AG04450 (cell line): ENCODE measurements at regions of chr1 and their contacts with region 1.

Region 1: GRCh38 chr1:91282695-91283420 is 121.8 kb downstream of the HFM1 start:
- DNase-seq: peak; percentile 37
- H3K4me3 ChIP-seq: no peak overlapping the region
- H3K27ac ChIP-seq: no peak overlapping the region
- H3K27me3 ChIP-seq: peaks cover 4% of the 10 kb centered on the region
- CTCF ChIP-seq: peak; percentile 85

Region 2: GRCh38 chr1:91080650-91081049 is 202.2 kb before region 1 on chr1:
- CTCF ChIA-PET with region 1: no interaction called
- POLR2A ChIA-PET with region 1: no interaction called
- DNase-seq: no peak
- H3K4me3 ChIP-seq: no peak overlapping the region
- H3K27ac ChIP-seq: no peak overlapping the region
- H3K27me3 ChIP-seq: no peaks in the 10 kb centered on the region
- CTCF ChIP-seq: no peak

Region 3: GRCh38 chr1:91404151-91405012 is 121.5 kb after region 1 on chr1 and contains the start of gene HFM1:
- CTCF ChIA-PET with region 1: interaction called, 11 read pairs
- POLR2A ChIA-PET with region 1: no interaction called
- DNase-seq: no peak
- H3K4me3 ChIP-seq: peak within 1 kb of the TSS; percentile 64
- H3K27ac ChIP-seq: no peak within 1 kb of the TSS
- H3K27me3 ChIP-seq: peaks cover 4% of the 10 kb centered on the region
- CTCF ChIP-seq: no peak; the same call in 1 of the 2 replicates
- polyA plus RNA-seq, gene HFM1: 0.04 TPM in 1 of 2 replicates, not detected in the other

Region 4: GRCh38 chr1:91428182-91428798 is 145.4 kb after region 1 on chr1:
- CTCF ChIA-PET with region 1: no interaction called
- POLR2A ChIA-PET with region 1: no interaction called
- DNase-seq: no peak
- H3K4me3 ChIP-seq: no peak overlapping the region
- H3K27ac ChIP-seq: no peak overlapping the region
- H3K27me3 ChIP-seq: peaks cover 3% of the 10 kb centered on the region
- CTCF ChIP-seq: no peak

Region 5: GRCh38 chr1:91500756-91501522 is 218.1 kb after region 1 on chr1 and contains the start of gene CDC7:
- CTCF ChIA-PET with region 1: interaction called, 13 read pairs
- POLR2A ChIA-PET with region 1: no interaction called
- DNase-seq: peak; percentile 85
- H3K4me3 ChIP-seq: peak within 1 kb of the TSS; percentile 91
- H3K27ac ChIP-seq: peak within 1 kb of the TSS; percentile 84
- H3K27me3 ChIP-seq: peaks cover 3% of the 10 kb centered on the region
- CTCF ChIP-seq: peak; percentile 58
- polyA plus RNA-seq, gene CDC7: 3.3 and 4.6 TPM in 2 replicates

Region 6: GRCh38 chr1:91617285-91617765 is 334.5 kb after region 1 on chr1:
- CTCF ChIA-PET with region 1: no interaction called
- POLR2A ChIA-PET with region 1: no interaction called
- DNase-seq: no peak
- H3K4me3 ChIP-seq: no peak overlapping the region
- H3K27ac ChIP-seq: no peak overlapping the region
- H3K27me3 ChIP-seq: peaks cover 6% of the 10 kb centered on the region
- CTCF ChIP-seq: no peak

Region 7: DNA sequence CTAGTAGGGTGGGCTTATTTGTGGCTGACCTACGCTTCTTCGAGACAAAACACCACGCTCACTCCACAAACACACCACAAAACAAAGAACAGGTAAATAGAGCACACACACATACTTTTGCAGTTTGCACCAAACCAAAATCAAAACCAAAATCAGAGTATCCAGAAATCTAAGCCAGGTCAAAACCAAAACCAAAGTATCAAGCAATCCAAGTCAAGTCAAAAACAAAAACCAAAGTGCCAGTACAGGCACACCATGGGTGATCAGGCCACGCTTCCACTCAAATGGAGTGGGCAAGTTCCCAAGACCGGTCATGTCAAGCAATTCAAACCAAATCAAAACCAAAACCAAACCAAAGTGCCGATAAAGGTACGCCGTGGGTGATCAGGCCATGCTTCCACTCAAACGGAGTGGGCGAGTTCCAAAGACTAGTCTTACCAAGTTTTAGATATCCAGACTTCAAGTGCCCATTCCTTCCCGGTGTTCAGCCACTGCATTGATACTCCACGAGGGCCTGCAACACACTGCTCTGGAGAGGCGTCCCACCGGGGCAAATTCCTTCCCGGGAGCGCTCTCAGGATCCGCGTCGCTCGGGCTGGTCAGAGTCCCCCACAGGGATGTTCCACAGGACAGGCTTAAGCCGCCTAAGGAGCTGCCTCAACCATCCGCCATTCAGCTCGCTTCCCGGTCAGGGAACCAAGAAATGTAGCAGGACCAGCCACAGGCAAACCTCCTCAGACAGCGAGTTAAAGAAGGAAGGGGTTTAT is 386.9 kb after region 1 on chr1:
- CTCF ChIA-PET with region 1: interaction called, 10 read pairs
- POLR2A ChIA-PET with region 1: no interaction called
- DNase-seq: no peak
- H3K4me3 ChIP-seq: no peak overlapping the region
- H3K27ac ChIP-seq: no peak overlapping the region
- H3K27me3 ChIP-seq: no peaks in the 10 kb centered on the region
- CTCF ChIP-seq: no peak

Region 8: GRCh38 chr1:91929250-91929649 is 646.4 kb after region 1 on chr1:
- CTCF ChIA-PET with region 1: interaction called, 10 read pairs
- POLR2A ChIA-PET with region 1: no interaction called
- DNase-seq: no peak
- H3K4me3 ChIP-seq: no peak overlapping the region
- H3K27ac ChIP-seq: no peak overlapping the region
- H3K27me3 ChIP-seq: no peaks in the 10 kb centered on the region
- CTCF ChIP-seq: no peak